ENCODE measurements at regions of chr5 and their contacts with region 1.

Region 1: GRCh38 chr5:76601470-76601869 is 21.7 kb downstream of the F2RL2 start:
- DNase-seq: peak; percentile 73
- H3K4me3 ChIP-seq: no peak overlapping the region
- H3K27ac ChIP-seq: no peak overlapping the region
- H3K4me1 ChIP-seq: peaks cover 10% of the 10 kb centered on the region
- CTCF ChIP-seq: peak; percentile 89

Region 2: DNA sequence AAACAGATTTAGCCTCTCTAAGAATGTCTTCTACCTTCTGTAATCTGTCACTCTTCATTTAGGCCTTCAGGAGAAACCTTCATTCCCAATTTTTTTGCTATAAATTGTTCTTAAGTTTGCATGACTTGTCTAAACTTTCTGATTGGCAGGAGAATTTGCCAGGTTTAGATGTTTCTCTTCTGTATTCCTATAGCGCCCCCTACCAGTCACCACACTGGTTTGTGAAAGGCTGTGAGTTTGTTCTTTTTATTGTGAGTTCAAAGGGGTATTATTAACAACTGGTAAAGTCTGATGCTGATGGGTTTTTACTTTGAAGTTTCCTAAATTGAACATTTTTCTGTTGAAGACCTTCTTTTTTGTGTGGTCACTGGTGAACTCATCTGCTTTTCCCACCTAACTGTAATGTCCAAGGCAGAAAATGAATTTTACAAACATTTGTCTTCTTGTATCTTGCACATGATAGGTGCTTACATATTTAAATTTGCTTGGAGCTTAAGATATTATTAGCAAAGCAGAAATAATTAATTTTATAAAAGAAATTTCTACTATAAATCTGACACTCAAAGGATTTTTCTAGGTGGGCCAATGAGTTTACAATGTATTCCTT is 40.1 kb after region 1 on chr5:
- CTCF ChIA-PET with region 1: no interaction called
- POLR2A ChIA-PET with region 1: interaction called, 3 read pairs
- intact Hi-C with region 1: loop called (anchors 1 kb)
- DNase-seq: peak; percentile 76
- H3K4me3 ChIP-seq: no peak overlapping the region
- H3K27ac ChIP-seq: no peak overlapping the region
- H3K4me1 ChIP-seq: peaks cover 15% of the 10 kb centered on the region
- CTCF ChIP-seq: peak; percentile 99

Region 3: DNA sequence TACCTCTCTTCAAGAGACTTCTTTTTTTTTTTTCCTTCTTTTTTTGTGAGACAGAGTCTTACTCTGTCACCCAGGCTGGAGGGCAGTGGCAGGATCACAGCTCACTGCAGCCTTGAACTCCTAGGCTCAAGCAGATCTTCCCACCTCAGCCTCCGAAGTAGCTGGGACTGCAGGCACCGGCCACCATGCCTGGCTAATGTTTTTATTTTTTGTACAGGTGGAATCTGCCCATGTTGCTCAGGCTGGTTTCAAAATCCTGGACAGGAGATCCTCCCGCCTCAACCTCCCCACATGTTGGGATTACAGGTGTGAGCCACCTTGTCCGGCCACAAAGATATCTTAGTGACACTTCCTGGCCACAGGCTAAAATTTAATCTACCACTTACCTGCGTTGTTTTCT is 174.5 kb after region 1 on chr5:
- CTCF ChIA-PET with region 1: interaction called, 3 read pairs
- POLR2A ChIA-PET with region 1: interaction called, 3 read pairs
- intact Hi-C with region 1: loop called (anchors 2 kb)
- DNase-seq: no peak
- H3K4me3 ChIP-seq: no peak overlapping the region
- H3K27ac ChIP-seq: no peak overlapping the region
- H3K4me1 ChIP-seq: no peaks in the 10 kb centered on the region
- CTCF ChIP-seq: no peak

Region 4: GRCh38 chr5:77015938-77016569 is 414.6 kb after region 1 on chr5:
- CTCF ChIA-PET with region 1: no interaction called
- POLR2A ChIA-PET with region 1: no interaction called
- intact Hi-C with region 1: loop called (anchors 10 kb)
- DNase-seq: peak; percentile 77
- H3K4me3 ChIP-seq: no peak overlapping the region
- H3K27ac ChIP-seq: no peak overlapping the region
- H3K4me1 ChIP-seq: peaks cover 4% of the 10 kb centered on the region
- CTCF ChIP-seq: peak; percentile 81